AG04449 (cell line): ENCODE measurements at regions of chr20 and their contacts with region 1.

Region 1: GRCh38 chr20:47379433-47380150 is 23.1 kb upstream of the ZMYND8 start:
- DNase-seq: peak; percentile 58
- H3K4me3 ChIP-seq: no peak overlapping the region
- CTCF ChIP-seq: no peak

Region 2: DNA sequence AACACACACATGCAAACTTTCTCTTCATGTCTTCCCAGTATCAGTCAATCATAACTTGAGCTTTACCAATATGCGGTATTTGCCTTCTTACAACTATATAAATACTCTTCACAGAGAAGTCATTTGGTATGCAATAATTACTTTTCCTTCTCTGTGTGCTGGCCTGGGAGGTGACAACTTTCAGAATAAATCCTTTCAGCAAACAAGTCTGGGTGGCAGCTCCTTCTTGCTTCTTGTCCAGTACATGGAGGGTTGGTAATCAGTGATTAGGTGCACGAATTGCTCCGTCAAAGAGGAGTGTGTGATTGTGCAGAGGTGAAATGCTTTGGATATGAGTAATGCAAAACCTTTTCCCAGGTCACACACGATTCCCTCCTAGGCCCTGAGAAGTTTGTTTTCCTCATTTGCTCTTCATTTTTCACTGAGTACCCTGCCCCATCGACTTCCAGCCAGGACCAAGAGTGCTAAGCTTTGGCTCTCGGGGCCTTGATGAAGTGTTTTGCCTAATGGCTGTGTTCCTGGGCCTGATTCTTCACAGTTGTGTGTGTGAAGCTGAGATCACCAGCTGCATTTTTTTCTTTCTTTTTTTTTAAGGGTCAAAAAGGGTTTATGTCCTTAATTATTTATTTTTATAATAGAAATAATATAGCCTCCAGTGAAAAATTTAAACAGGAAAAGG is 239.6 kb before region 1 on chr20:
- CTCF ChIA-PET with region 1: no interaction called
- POLR2A ChIA-PET with region 1: no interaction called
- DNase-seq: no peak
- H3K4me3 ChIP-seq: no peak overlapping the region
- CTCF ChIP-seq: no peak

Region 3: DNA sequence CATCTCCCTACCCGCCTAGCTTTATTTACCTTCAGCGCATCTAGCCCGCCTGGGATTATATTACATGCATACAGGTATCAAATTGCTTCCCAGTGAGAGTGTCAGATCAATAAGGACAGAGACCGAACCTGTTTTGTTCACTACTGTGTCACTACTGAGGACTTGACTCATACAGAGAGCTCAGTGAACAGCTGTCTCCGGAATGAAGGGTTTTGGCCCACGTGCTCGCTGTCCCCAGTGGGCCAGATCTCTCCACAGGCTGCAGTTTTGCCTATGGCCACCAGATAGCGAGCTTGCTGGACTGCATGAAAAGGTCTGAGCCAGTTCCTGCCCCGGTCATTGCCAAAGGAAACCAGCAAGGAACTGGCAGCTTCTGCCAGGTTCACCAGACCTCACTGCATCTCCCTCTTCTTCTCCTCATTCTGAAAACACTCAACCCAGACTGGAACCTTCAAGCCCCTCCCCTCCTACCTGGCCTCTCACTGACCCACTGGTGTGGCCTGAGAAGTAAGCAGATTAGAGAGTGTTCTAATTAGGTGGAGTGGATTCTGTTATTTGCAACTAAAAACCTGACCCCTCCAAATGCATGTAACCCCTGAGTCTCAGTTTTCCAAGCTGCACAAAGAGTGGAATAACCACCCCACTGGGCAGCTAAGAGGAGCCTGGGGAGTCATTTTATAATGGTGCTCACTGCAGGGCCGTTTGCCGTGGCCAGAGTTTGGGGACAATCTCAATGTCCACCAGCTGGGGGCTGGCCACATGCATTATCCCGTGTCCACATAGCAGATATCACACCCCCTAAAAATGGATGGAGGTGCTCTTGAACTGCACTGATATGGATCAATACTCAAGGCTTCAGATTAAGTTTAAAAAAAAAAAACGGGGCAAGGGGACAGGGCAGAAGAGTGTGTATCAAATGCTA is 173.8 kb before region 1 on chr20:
- CTCF ChIA-PET with region 1: interaction called, 97 read pairs
- POLR2A ChIA-PET with region 1: no interaction called
- DNase-seq: no peak
- H3K4me3 ChIP-seq: no peak overlapping the region
- CTCF ChIP-seq: peak; percentile 74

Region 4: GRCh38 chr20:47252879-47253307 is 126.7 kb before region 1 on chr20:
- CTCF ChIA-PET with region 1: interaction called, 23 read pairs
- POLR2A ChIA-PET with region 1: no interaction called
- DNase-seq: no peak
- H3K4me3 ChIP-seq: no peak overlapping the region
- CTCF ChIP-seq: no peak

Region 5: DNA sequence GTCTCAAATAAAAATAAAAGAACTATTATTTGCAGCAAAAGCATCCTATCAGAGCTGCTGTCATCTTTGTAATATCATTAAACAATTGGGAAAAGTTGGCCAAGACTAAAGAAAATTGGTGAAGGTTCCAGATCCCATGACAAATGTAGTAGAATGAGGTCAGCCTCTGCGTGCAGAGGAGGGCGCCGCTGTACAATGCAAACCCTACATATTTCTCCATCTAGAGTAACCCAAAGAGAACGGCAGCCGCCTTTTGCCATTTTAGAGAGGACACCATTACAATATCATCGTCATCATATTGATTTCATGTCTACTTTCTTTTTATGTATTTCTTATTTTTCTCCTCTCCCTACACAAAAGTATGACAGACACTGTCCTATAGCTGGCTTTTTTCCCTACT is 82.6 kb before region 1 on chr20:
- CTCF ChIA-PET with region 1: interaction called, 10 read pairs
- POLR2A ChIA-PET with region 1: no interaction called
- DNase-seq: no peak
- H3K4me3 ChIP-seq: no peak overlapping the region
- CTCF ChIP-seq: no peak

Region 6: GRCh38 chr20:47356526-47357295 is 22.9 kb before region 1 on chr20 and contains the start of gene ZMYND8:
- CTCF ChIA-PET with region 1: interaction called, 46 read pairs
- POLR2A ChIA-PET with region 1: interaction called, 25 read pairs
- DNase-seq: no peak
- H3K4me3 ChIP-seq: peak within 1 kb of the TSS; percentile 52
- CTCF ChIP-seq: no peak

Region 7: GRCh38 chr20:47610247-47610944 is 230.8 kb after region 1 on chr20:
- CTCF ChIA-PET with region 1: interaction called, 16 read pairs
- POLR2A ChIA-PET with region 1: no interaction called
- DNase-seq: peak; percentile 50
- H3K4me3 ChIP-seq: no peak overlapping the region
- CTCF ChIP-seq: no peak